ENCODE measurements at regions of chr4 and their contacts with region 1.

Region 1: GRCh38 chr4:27318743-27319142 is 458.1 kb downstream of the STIM2 start:
- DNase-seq: no peak
- H3K4me3 ChIP-seq: no peak overlapping the region
- H3K27ac ChIP-seq: no peak overlapping the region
- H3K4me1 ChIP-seq: no peaks in the 10 kb centered on the region
- H3K27me3 ChIP-seq: no peaks in the 10 kb centered on the region
- CTCF ChIP-seq: peak in 2 of 4 experiments; percentile 16 to 37
- POLR2A ChIP-seq: no peak

Region 2: DNA sequence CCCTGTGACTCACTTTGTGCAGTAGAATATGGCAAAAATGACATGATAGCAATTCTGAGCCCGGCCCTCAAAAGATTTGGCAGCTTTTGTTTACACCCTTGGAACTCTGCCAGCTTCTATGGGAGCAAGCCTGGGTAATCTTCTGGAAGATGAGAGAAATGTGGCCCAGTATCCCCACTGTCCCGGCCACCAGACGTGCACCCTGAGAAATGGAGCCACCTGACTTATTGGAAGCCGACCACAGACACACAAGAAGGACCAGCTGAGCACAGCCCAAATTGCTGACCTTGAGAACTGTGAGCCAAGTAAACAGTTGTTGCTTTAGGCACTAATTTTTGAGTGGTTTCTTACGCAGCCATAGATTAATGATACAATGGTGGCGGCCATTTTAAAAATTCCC is 261.1 kb before region 1 on chr4:
- intact Hi-C with region 1: loop called (anchors 10 kb)
- DNase-seq: no peak
- H3K4me3 ChIP-seq: no peak overlapping the region
- H3K27ac ChIP-seq: no peak overlapping the region
- H3K4me1 ChIP-seq: no peaks in the 10 kb centered on the region
- H3K27me3 ChIP-seq: no peaks in the 10 kb centered on the region
- CTCF ChIP-seq: no peak
- POLR2A ChIP-seq: no peak

Region 3: DNA sequence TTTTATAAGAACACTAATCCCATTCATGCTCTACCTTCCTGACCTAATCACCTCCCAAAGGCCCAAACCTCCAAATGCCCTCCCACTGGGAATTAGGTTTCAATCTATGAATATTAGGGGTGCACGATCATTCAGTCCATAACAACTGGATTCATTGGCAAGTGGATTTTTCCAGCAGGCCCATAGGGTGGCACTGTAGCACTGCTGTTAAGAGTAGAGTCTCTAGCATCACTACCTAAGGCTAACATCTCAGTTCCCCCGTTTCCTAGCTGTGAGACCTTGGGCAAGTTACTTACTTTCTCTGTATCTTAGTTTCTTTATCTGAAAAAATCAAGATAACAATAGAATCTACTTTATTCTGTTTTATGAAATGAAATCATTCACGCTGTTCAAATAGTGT is 142.3 kb before region 1 on chr4:
- intact Hi-C with region 1: loop called (anchors 10 kb)
- DNase-seq: no peak
- H3K4me3 ChIP-seq: no peak overlapping the region
- H3K27ac ChIP-seq: no peak overlapping the region
- H3K4me1 ChIP-seq: no peaks in the 10 kb centered on the region
- H3K27me3 ChIP-seq: no peaks in the 10 kb centered on the region
- CTCF ChIP-seq: peak in 3 of 4 experiments; percentile 19 to 49 (median 35)
- POLR2A ChIP-seq: no peak